ENCODE measurements at regions of chr6 and their contacts with region 1.

Region 1: DNA sequence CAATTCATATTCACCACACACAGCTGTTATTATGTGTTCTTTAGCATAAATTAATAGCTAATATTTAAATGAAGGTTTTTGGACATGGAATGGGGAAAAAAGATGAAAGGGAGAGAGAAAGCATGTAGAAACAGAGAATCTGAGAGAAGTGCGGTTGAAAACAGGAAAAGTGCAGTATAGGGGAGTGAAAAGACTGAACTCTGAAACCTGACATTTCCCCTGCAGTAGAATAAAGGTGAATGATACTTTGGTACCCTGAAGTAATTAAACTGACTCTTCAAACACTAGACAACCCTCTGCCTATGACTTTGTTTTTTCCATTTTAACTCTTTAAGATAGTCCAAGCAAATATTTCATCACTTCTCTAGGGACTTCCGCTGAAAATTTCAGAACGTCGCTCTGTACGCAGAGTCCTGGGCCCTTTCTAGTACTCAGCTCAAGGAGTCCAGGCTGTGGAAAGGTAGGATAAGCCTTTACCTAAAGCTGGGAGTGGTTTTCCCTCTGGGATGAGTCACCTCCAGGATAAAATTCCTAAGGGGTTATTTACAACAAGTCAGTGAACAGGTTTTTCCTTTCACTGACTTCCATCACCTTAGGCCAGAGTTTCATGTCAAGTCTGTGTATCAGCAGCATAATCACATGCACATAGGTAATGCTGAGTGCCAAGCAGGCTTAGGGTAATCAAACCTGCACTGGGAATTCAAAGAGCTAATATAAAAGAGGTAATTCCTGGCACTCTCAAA is 614.5 kb downstream of the PKHD1 start:
- DNase-seq: no peak
- H3K4me3 ChIP-seq: no peak overlapping the region
- H3K27ac ChIP-seq: peak overlapping the region in 1 of 4 donors; percentile 42
- H3K4me1 ChIP-seq: peaks cover 0 to 25% (median 3%) of the 10 kb centered on the region in 3 donors
- H3K27me3 ChIP-seq: no peaks in the 10 kb centered on the region
- CTCF ChIP-seq: no peak
- POLR2A ChIP-seq: no peak

Region 2: GRCh38 chr6:51250317-51250716 is 222.6 kb before region 1 on chr6:
- intact Hi-C with region 1: no loop called
- DNase-seq: no peak
- H3K4me3 ChIP-seq: no peak overlapping the region
- H3K27ac ChIP-seq: no peak overlapping the region
- H3K4me1 ChIP-seq: no peaks in the 10 kb centered on the region
- H3K27me3 ChIP-seq: no peaks in the 10 kb centered on the region
- CTCF ChIP-seq: no peak
- POLR2A ChIP-seq: no peak

Region 3: DNA sequence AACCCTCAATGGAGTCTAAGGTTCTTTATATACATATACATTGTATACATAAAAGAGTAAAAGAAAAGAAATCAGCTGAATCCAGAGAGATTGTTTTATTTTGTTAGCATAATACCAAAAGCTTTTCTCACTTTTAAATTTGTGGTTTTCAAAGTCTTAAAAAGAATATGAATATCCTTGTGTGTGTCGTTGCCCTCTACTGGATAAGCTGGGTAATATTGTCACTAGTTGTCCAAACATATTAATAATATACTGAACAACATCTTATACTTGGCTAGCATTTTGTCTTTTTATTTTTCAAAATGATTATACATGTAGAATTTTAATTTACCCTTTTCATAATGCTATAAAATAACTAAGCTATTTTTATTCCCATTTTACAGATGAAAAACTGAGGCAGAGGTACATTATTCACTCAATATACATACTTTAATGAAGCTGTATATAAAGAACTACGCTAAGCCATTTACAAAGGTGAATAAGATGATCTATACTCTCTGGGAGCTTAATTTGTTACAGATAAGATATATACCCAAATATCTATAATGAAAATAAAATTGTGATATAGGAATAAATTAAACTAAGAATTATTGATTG is 122.5 kb before region 1 on chr6:
- intact Hi-C with region 1: loop called (anchors 10 kb)
- DNase-seq: no peak
- H3K4me3 ChIP-seq: no peak overlapping the region
- H3K27ac ChIP-seq: peak overlapping the region in 1 of 4 donors; percentile 36
- H3K4me1 ChIP-seq: peaks cover 0 to 61% (median 8%) of the 10 kb centered on the region in 3 donors
- H3K27me3 ChIP-seq: no peaks in the 10 kb centered on the region
- CTCF ChIP-seq: peak in 5 of 6 experiments; percentile 14 to 71 (median 45)
- POLR2A ChIP-seq: no peak